ENCODE measurements at regions of chr18 and their contacts with region 1.

Region 1: DNA sequence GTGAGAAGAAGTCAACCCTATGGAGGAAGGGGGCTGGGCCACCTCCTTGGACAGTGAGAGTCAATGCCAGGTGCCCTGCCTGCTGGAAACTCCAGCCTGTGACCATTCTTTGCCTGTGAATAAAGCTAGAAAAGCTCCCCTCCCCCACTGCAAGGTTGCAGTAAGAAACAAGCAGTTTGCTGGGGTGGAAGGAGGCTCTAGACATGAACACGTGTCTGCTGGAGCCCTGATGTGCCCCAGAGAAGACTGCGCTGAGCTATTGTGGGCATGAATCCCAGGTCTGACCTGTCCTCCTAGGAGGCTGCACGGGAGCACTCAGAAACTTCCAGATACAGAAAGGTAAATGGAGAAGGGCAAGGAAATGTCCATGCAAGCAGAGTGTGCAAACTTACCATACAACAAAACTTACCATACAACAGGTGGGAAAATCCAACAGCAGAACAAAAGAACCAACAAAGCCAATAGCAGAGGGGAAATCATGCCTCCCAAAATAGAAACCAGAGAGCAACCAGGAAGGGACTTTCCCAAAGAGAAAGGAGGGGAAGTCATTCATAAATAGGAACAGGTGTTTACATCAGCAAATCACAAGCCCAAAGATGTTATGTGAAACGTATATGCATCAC is 278.7 kb downstream of the BCL2 start:
- DNase-seq: peak; percentile 83
- ATAC-seq: peak; percentile 83
- H3K4me3 ChIP-seq: peak overlapping the region; percentile 19; the same call in 1 of the 2 replicates
- H3K27ac ChIP-seq: peak overlapping the region; percentile 84
- H3K4me1 ChIP-seq: peaks cover 36% of the 10 kb centered on the region
- H3K27me3 ChIP-seq: no peaks in the 10 kb centered on the region
- CTCF ChIP-seq: no peak
- EP300 ChIP-seq: peak; percentile 73 to 87
- POLR2A ChIP-seq: peak; percentile 22; the same call in 1 of the 2 replicates
- RAD21 ChIP-seq: no peak

Region 2: DNA sequence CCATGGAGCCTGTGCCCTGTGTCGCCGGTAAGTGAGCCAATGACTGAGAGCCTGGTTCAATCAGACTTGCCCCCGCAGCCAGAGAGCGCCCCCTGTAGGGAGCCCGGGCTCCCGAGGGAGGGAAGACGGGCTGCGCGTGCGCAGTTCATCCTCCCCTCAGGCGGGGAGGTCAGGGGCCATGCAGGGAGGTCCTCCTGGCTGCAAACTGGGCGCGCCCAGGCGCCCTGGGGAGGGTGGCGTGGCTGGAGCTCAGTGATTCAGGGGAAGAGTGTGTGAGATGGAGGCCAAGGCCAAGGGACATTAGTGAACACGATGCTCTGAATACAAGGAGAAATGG is 48.9 kb before region 1 on chr18:
- CTCF ChIA-PET with region 1: no interaction called
- POLR2A ChIA-PET with region 1: no interaction called
- RAD21 ChIA-PET with region 1: no interaction called
- SMC1A ChIA-PET with region 1: no interaction called
- in situ Hi-C with region 1: no loop called
- intact Hi-C with region 1: no loop called
- DNase-seq: no peak
- ATAC-seq: no peak
- H3K4me3 ChIP-seq: no peak overlapping the region
- H3K27ac ChIP-seq: no peak overlapping the region
- H3K4me1 ChIP-seq: no peaks in the 10 kb centered on the region
- H3K27me3 ChIP-seq: no peaks in the 10 kb centered on the region; a peak in 1 of 4 replicates
- CTCF ChIP-seq: no peak
- EP300 ChIP-seq: no peak
- POLR2A ChIP-seq: no peak
- RAD21 ChIP-seq: no peak

Region 3: DNA sequence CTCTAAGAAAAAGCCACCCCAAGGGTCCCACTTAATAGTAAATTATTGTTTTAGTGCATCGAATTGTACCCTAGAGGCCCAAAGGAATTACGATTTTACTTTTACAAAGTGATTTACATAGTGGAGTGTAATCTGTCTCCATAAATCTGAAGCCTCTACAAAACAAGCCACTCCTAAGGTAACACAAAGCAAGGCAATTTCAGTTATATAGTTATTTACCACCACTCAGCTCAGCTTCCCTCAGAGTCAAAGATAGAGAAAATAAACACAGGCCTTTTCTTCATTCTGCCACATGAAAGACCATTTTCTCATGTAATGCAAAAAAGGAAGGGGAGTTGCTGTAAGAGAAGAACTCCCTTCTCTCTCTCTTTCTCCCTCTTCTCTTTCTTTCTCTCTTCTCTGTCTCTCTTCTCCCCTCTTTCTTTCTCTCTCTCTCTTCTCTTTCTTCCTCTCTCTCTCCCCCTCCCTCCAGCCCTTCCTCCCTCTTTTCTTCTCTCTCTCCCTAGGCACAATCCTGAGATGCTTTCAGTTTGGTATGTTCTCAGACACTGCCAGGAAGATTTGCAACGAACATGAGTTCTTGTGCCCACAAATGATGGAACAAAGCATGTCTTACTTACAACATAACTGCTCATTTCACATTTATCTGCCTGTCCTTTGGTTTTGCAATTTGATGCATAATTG is 14.1 kb after region 1 on chr18:
- CTCF ChIA-PET with region 1: interaction called, 5 read pairs
- POLR2A ChIA-PET with region 1: interaction called, 6 read pairs
- RAD21 ChIA-PET with region 1: interaction called, 5 read pairs
- SMC1A ChIA-PET with region 1: interaction called, 18 read pairs
- in situ Hi-C with region 1: no loop called
- intact Hi-C with region 1: no loop called
- DNase-seq: no peak
- ATAC-seq: peak; percentile 14; the same call in 1 of the 3 replicates
- H3K4me3 ChIP-seq: no peak overlapping the region
- H3K27ac ChIP-seq: no peak overlapping the region
- H3K4me1 ChIP-seq: peaks cover 13% of the 10 kb centered on the region
- H3K27me3 ChIP-seq: no peaks in the 10 kb centered on the region
- CTCF ChIP-seq: no peak
- EP300 ChIP-seq: no peak
- POLR2A ChIP-seq: no peak
- RAD21 ChIP-seq: no peak

Measured in GM12878 (cell line).